Endothelial cell of umbilical vein (primary cell): ENCODE measurements at regions of chr1 and their contacts with region 1.

Region 1: DNA sequence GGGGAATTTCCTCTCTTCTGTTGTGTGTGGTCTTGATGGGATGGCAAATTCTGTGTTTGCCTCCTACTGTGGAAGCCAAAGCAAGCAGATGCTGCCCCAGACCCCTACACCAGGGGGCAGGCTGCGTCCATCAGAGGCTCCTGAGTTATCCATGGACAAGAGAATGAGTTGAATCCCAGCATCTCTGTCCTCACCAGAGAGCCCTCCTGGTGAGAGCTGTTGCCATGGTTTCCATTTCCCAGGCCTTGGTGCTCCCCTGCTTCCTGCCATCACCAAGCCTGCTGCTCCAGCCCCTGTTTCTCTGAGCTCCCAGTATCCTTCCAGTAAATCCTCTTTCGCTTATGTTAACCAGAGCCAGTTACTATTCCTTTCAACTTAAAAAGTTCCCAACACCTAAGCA is 20.4 kb upstream of the GNG12 start:
- DNase-seq: peak; percentile 89
- H3K4me3 ChIP-seq: no peak overlapping the region
- H3K27ac ChIP-seq: no peak overlapping the region
- H3K4me1 ChIP-seq: peaks cover 49% of the 10 kb centered on the region
- H3K27me3 ChIP-seq: no peaks in the 10 kb centered on the region
- CTCF ChIP-seq: peak; percentile 94 to 95
- POLR2A ChIP-seq: no peak

Region 2: GRCh38 chr1:67332653-67333529 is 520.8 kb before region 1 on chr1:
- CTCF ChIA-PET with region 1: no interaction called
- POLR2A ChIA-PET with region 1: no interaction called
- dilution Hi-C with region 1: no loop called
- intact Hi-C with region 1: no loop called
- DNase-seq: no peak
- H3K4me3 ChIP-seq: no peak overlapping the region
- H3K27ac ChIP-seq: no peak overlapping the region
- H3K4me1 ChIP-seq: no peaks in the 10 kb centered on the region
- H3K27me3 ChIP-seq: peaks cover 3 to 6% of the 10 kb centered on the region in 2 experiments
- CTCF ChIP-seq: no peak
- POLR2A ChIP-seq: no peak

Region 3: DNA sequence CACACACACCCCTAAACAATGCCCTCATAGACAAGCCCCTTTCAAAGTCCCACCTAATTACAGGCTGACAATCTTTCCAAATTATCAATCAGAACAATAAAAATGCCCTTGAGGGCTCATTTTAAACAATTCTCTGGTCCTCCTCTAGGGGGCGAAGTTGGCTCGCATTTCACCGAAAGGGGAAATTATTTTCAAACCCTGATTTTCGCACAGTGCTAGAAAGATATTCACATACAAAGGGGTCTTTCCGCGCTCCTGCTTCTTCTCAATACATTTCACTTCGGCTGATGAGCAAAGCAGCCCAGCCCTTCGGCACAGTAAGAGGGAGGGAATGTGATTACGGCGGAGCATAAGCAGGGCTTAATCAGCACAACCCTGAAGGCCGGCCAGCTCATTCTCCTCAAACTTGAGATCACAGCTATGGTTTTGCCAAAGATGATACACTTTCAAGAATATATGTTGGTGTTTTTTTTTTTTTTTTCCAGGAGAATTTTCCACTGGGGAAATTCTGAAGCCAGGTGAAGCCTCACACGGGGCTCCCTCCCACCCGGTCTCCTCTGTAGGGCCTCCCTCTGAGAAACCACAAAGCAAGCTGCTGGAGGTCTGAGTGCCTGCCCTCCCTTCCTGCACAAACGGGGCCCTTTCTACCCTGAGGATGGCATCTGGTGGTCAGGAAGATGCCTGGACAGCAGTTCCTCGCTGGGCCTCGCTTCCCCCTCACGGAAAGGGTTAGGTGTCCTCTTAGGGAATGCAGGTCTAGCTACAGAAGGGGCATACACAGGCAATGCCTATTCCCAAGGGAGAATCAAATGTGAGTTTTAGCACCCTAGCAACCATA is 87.3 kb before region 1 on chr1:
- CTCF ChIA-PET with region 1: interaction called, 108 read pairs
- POLR2A ChIA-PET with region 1: interaction called, 15 read pairs
- dilution Hi-C with region 1: no loop called
- intact Hi-C with region 1: loop called (anchors 1 kb)
- DNase-seq: peak; percentile 84
- H3K4me3 ChIP-seq: no peak overlapping the region
- H3K27ac ChIP-seq: peak overlapping the region; percentile 58
- H3K4me1 ChIP-seq: peaks cover 23% of the 10 kb centered on the region
- H3K27me3 ChIP-seq: no peaks in the 10 kb centered on the region
- CTCF ChIP-seq: peak; percentile 47 to 72
- POLR2A ChIP-seq: no peak

Region 4: GRCh38 chr1:67804710-67805109 is 49.0 kb before region 1 on chr1:
- CTCF ChIA-PET with region 1: no interaction called
- POLR2A ChIA-PET with region 1: no interaction called
- dilution Hi-C with region 1: no loop called
- intact Hi-C with region 1: no loop called
- DNase-seq: no peak
- H3K4me3 ChIP-seq: no peak overlapping the region
- H3K27ac ChIP-seq: no peak overlapping the region
- H3K4me1 ChIP-seq: peaks cover 3% of the 10 kb centered on the region
- H3K27me3 ChIP-seq: no peaks in the 10 kb centered on the region
- CTCF ChIP-seq: no peak
- POLR2A ChIP-seq: no peak

Region 5: GRCh38 chr1:67880056-67880601 is 26.4 kb after region 1 on chr1:
- CTCF ChIA-PET with region 1: interaction called, 3 read pairs
- POLR2A ChIA-PET with region 1: no interaction called
- dilution Hi-C with region 1: no loop called
- intact Hi-C with region 1: loop called (anchors 2 kb)
- DNase-seq: peak; percentile 66
- H3K4me3 ChIP-seq: no peak overlapping the region
- H3K27ac ChIP-seq: peak overlapping the region; percentile 28
- H3K4me1 ChIP-seq: peaks cover 22% of the 10 kb centered on the region
- H3K27me3 ChIP-seq: no peaks in the 10 kb centered on the region
- CTCF ChIP-seq: no peak
- POLR2A ChIP-seq: no peak

Region 6: GRCh38 chr1:68010090-68010489 is 156.4 kb after region 1 on chr1:
- CTCF ChIA-PET with region 1: interaction called, 147 read pairs
- POLR2A ChIA-PET with region 1: no interaction called
- dilution Hi-C with region 1: no loop called
- intact Hi-C with region 1: loop called (anchors 1 kb)
- DNase-seq: peak; percentile 49
- H3K4me3 ChIP-seq: no peak overlapping the region
- H3K27ac ChIP-seq: no peak overlapping the region
- H3K4me1 ChIP-seq: peaks cover 12% of the 10 kb centered on the region
- H3K27me3 ChIP-seq: no peaks in the 10 kb centered on the region
- CTCF ChIP-seq: peak; percentile 10 to 30
- POLR2A ChIP-seq: no peak

Region 7: DNA sequence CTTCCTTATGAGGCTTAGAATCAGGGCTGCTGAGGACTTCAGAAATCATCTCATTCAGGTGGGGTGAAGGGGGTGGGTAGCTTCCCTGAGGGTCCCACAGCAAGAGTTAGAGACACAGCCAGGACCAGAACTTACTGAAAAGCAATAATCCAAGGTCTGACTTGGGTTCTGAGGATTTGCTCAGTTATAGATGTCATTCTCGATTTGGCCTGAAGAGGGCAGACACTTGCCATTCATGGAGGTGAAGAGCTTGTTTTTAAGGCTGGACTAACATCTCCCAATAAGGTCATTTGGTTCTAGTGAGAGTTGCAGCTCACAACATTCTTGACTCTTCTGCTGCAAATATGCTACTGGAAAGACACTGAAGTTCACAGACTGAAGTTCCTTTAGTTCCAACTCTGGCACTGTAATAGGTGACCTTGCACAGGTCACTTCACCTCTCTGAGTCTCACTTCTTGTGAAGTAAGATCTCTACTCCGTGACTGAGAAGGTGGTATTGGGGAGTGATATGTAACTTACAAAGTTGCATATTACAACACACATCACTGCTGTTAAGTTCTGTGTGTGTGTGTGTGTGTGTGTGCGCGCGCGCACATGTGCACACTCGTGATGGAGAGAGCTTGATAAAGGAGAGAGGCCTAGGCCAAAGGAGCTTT is 266.6 kb after region 1 on chr1:
- CTCF ChIA-PET with region 1: interaction called, 24 read pairs
- POLR2A ChIA-PET with region 1: no interaction called
- dilution Hi-C with region 1: no loop called
- intact Hi-C with region 1: no loop called
- DNase-seq: peak; percentile 85
- H3K4me3 ChIP-seq: no peak overlapping the region
- H3K27ac ChIP-seq: no peak overlapping the region
- H3K4me1 ChIP-seq: peaks cover 5% of the 10 kb centered on the region
- H3K27me3 ChIP-seq: no peaks in the 10 kb centered on the region
- CTCF ChIP-seq: peak; percentile 59 to 71
- POLR2A ChIP-seq: peak; percentile 26

Region 8: DNA sequence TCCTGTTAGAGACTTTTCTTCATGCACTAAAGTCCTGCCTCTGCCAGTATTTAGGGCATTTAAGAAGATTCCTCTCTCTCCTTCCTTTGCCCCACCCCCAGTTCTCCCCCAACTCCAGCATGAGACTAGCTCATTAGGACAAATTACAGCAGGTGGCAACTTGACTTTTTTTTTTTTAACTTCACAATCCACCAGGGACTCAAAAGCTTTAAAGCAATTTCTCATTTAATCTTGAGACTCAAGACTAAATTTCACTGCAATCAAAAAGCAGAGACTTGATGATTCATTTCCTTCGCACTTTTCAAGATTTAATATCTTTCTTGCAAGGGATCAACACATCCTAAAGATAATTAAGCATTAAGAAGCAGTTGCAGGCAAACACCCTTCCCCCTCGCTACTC is 303.7 kb after region 1 on chr1:
- CTCF ChIA-PET with region 1: no interaction called
- POLR2A ChIA-PET with region 1: no interaction called
- dilution Hi-C with region 1: no loop called
- intact Hi-C with region 1: no loop called
- DNase-seq: no peak
- H3K4me3 ChIP-seq: no peak overlapping the region
- H3K27ac ChIP-seq: no peak overlapping the region
- H3K4me1 ChIP-seq: peaks cover 3% of the 10 kb centered on the region
- H3K27me3 ChIP-seq: no peaks in the 10 kb centered on the region
- CTCF ChIP-seq: no peak
- POLR2A ChIP-seq: no peak

Region 9: DNA sequence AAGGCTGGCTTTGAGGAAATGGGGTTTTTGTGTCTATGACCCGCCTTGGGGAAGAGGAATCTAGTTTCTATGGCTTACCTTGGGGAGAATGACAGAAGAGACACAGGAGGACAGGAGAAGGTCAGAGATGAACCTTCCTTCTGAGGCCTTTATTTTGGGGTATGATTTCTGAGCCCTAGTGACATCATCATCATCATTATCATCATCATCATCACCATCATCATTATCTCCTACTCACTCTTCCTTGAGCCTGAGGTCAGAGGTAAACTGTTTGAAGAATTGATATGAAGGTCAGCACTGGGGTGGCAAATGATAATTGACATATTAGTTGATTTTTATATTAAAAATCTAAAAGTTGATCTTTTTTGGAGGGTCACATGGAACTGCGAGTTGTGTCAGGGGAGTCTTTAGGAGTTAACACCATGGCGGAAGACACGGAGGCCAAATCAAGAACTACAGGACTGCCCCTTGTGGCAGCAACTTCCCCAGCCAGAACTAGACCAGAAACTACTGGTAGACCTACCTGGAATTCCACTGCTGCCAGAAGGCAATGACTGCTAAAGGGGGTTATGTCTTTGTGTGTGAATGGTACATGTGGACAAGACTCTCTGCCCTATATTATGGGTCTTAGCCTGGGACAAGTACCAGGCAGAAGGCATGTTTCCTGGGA is 428.4 kb after region 1 on chr1:
- CTCF ChIA-PET with region 1: no interaction called
- POLR2A ChIA-PET with region 1: no interaction called
- dilution Hi-C with region 1: no loop called
- intact Hi-C with region 1: no loop called
- DNase-seq: no peak
- H3K4me3 ChIP-seq: no peak overlapping the region
- H3K27ac ChIP-seq: no peak overlapping the region
- H3K4me1 ChIP-seq: no peaks in the 10 kb centered on the region
- H3K27me3 ChIP-seq: no peaks in the 10 kb centered on the region
- CTCF ChIP-seq: no peak
- POLR2A ChIP-seq: no peak

Region 10: DNA sequence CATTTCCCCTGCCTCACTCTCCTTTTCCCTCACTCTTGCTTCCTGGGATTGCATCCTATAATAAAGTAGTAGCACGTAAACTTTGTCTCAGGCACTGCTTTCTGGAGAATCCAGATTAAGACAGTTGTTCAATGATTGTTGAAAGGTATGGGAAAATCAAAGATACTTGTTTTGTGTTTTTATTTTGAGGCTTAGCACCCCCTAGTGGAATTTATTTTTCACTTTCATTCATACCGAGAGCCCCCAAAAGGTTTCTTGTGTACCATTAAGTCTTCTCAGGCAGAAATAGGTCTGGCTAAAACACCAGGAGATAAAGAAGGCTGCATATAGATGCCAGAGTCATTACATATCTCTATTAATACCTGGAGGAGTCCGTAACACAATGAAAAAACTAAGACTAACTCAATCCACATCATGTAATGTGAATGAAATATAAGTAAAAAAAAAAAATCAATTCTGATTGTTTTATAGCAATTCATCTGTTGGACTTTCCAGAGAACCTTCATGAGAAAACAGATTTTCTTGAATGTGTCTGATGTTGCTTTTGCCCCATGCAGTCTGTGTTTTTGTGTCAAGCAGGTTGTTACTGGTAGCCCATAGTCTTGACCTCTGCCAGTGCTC is 492.6 kb after region 1 on chr1:
- CTCF ChIA-PET with region 1: interaction called, 12 read pairs
- POLR2A ChIA-PET with region 1: no interaction called
- dilution Hi-C with region 1: no loop called
- intact Hi-C with region 1: loop called (anchors 1 kb)
- DNase-seq: peak; percentile 68
- H3K4me3 ChIP-seq: no peak overlapping the region
- H3K27ac ChIP-seq: no peak overlapping the region
- H3K4me1 ChIP-seq: no peaks in the 10 kb centered on the region
- H3K27me3 ChIP-seq: no peaks in the 10 kb centered on the region
- CTCF ChIP-seq: peak; percentile 37 to 39
- POLR2A ChIP-seq: no peak